HEK293 (cell line): ENCODE measurements at regions of chr17 and their contacts with region 1.

Region 1: DNA sequence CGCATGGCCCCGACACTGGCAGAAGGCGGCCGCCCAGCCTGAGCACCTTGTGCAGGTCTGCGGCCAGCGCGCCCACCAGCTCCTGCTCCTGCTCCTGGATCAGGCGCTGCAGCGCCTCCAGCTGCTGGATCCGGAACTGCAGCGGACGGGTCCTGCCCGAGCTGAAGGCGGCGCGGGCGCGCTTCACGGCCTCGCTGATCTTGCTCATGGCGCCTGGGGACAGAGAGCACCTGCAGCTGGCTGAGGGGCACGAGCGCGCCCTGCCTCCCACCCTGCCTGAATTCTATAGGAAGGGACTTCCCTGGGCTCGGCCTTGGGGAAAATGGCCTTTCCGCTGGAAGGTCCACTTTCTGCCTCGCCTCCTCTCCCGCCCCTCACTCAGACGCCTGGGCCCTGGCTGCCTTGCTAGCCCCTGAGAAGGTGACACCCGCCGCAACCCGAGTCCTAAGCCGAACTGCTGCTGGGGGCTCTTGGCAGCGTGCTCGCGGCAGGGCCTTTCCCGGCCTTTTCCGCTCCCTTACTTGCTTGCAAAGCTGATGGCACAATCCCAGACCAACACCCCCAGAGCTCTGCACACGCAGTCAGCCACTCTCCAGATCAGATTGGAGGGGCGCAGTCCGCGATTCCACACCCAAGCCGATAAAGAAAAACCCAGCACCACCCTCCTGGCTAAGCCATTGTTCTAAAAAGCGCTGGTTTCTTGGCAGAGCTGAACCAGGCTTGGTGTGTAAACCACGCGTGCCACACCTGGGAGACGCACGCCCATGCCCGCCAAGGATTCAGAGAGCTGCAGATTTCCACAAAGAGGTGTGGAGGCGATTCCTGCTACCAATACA is 3.0 kb downstream of the ALDH3A1 start:
- H3K4me3 ChIP-seq: peak overlapping the region; percentile 35
- H3K27ac ChIP-seq: no peak overlapping the region; the same call in 1 of the 2 replicates
- H3K4me1 ChIP-seq: peaks cover 3% of the 10 kb centered on the region; the same call in 1 of the 2 replicates
- CTCF ChIP-seq: peak; percentile 74

Region 2: DNA sequence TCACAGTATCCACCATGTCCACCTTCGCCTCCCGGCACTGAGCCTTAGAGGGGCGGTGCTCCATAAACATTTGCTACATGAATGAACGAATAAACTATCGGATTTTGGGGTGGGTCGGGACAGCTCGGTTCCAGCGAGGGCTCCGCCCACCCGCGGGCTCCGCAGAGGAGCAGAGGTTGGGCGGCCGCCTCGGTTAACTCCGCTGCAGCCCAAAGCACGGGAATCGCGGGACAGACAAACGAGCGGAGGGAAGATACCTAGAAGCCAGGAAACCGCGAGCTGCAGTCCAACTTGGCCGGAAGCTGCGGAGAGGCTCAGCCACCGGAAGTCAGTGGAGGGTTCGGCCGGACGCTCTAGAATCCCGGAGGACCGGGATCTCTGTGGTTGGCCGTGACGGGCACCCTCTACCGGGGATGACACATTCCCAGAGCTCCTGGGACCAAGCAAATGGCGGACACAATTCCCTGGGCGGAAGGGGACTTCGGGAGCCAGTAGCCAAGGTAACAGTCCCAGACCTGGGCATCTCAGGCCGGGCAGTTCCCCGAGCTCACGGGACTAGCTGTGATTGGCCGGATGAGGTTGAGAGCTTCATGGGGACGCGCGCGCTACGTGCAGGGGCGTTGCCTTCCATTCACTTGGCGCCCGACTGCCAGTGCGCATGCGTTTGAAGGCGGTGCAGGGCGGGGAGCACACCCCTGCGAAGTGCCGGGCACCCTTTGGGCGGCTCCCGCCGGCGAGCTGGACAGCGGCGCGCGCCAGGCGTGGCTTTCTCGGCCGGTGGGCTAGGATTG is 367.3 kb before region 1 on chr17:
- CTCF ChIA-PET with region 1: no interaction called
- POLR2A ChIA-PET with region 1: interaction called, 10 read pairs
- H3K4me3 ChIP-seq: peak overlapping the region; percentile 80
- H3K27ac ChIP-seq: peak overlapping the region; percentile 72
- H3K4me1 ChIP-seq: peaks cover 8% of the 10 kb centered on the region
- CTCF ChIP-seq: no peak; the same call in 1 of the 2 replicates

Region 3: DNA sequence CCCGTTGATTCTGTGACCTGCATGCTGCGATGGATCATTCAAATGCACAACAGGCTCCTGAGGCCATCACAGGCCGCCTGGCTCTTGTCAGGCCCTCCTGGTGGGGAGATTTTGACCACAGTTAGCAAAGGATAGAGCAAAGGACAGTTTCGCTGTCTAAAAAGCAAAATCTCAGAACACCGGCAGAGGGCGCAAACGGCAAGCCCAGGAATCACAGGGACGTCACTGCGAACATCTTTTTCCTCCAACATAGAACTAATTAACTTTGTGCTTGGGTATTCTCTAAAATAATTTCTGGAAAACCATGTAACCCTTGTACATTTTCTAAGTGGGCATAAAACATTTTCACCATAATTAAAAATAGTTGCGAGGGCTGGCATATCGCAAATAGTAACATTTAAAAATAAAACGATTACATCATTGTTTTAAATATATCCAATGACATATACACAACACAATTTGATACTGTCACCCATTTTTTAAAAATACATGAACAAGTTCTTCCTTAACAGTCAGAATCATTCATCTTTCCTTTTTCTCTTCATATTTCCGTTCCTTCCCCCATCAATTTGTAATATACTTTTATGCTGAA is 231.1 kb before region 1 on chr17:
- CTCF ChIA-PET with region 1: interaction called, 11 read pairs
- POLR2A ChIA-PET with region 1: no interaction called
- H3K4me3 ChIP-seq: no peak overlapping the region
- H3K27ac ChIP-seq: no peak overlapping the region
- H3K4me1 ChIP-seq: no peaks in the 10 kb centered on the region
- CTCF ChIP-seq: peak; percentile 82

Region 4: GRCh38 chr17:19533718-19534561 is 211.2 kb before region 1 on chr17 and contains the start of gene SLC47A1:
- CTCF ChIA-PET with region 1: interaction called, 3 read pairs
- POLR2A ChIA-PET with region 1: interaction called, 12 read pairs
- H3K4me3 ChIP-seq: peak within 1 kb of the TSS; percentile 63
- H3K27ac ChIP-seq: peak within 1 kb of the TSS; percentile 58; the same call in 1 of the 2 replicates
- H3K4me1 ChIP-seq: 0 out of 2 replicates have a peak, but pooled peaks cover 2% of the 10 kb centered on the region
- CTCF ChIP-seq: peak; percentile 9; the same call in 1 of the 2 replicates

Region 5: DNA sequence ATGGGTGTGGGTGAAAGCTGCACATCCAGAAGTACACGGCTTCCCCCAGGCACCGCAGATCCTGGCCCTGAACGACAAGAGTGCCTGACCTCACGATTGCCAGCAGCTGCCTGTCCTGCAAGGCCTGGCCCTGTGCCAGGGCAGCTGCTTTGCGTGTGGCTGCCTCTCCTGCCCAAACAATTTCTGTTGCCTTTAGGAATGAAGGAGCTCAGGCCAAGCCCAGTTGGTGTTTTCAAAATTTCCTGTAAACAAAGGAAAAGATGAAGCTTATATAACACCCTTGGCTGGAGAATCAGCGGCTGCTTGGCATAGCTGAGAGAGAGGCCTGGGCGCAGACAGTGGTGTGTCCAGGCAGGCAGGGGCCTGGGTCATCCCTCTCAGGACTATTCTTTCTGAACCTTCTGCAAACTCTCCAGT is 17.1 kb before region 1 on chr17:
- CTCF ChIA-PET with region 1: interaction called, 21 read pairs
- POLR2A ChIA-PET with region 1: interaction called, 6 read pairs
- H3K4me3 ChIP-seq: no peak overlapping the region
- H3K27ac ChIP-seq: no peak overlapping the region
- H3K4me1 ChIP-seq: 0 out of 2 replicates have a peak, but pooled peaks cover 2% of the 10 kb centered on the region
- CTCF ChIP-seq: no peak

Region 6: DNA sequence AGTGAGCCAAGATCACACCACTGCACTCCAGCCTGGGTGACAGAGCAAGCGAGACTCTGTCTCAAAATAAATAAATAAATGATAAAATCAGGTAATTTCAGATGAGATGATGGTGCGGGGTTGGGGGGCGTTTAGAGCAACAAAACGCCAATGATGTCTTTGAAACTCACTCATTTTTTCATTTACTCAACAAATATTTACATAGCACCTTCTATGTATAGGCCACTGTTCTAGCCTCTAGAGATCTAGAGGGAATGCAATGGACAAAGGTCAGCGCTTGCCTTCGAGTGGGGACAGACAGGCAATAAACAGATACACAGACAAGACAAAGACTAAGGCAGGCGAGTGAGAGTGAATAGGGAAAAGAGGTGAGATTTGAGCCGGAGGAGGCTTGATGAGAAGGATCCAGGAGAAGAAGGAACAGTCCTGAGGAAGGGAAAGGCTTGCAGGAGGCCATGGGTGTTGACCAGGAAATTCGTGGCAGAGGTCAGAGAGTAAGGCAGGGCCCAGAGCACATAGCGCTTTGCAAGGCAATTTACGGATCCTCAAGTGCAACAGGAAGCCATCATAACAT is 11.1 kb before region 1 on chr17:
- CTCF ChIA-PET with region 1: interaction called, 21 read pairs
- POLR2A ChIA-PET with region 1: interaction called, 3 read pairs
- H3K4me3 ChIP-seq: no peak overlapping the region
- H3K27ac ChIP-seq: no peak overlapping the region
- H3K4me1 ChIP-seq: no peaks in the 10 kb centered on the region
- CTCF ChIP-seq: no peak